Esophagus muscularis mucosa (tissue), 4 donors: ENCODE measurements at regions of chr15 and their contacts with region 1.

Region 1: DNA sequence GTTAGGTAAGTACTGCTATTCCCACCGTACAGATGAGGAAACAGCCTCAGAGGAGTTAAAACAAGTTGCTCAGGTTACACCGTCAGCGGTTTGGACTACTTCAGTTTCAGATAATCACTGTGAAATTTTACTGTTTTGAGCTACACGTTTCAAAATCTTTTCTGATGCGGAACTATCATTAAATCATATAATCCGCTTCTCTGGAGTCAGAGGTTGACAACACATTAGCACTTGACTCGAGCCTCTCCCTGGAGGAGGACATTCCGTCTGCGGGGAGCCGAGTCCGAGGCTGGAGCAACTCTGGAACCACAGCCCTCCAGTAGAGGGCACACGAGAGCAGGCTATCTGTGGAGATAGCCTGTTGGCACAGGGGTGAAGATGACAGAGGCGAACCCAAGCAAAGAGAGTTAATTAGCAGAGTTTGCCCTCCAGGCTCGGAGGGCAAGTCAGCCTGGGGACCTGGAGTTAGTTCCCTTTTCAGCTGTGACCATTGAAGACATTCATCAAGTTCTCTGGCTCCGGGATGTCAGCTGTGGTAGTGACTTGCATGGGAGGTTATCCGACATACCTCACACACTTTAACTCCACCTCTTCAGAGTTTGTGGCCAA is 131.2 kb downstream of the IGF1R start:
- DNase-seq: peak; percentile 94
- H3K4me3 ChIP-seq: no peak overlapping the region
- H3K27ac ChIP-seq: peak overlapping the region in 2 of 4 donors; percentile 13 to 50
- H3K4me1 ChIP-seq: peaks cover 32 to 58% (median 38%) of the 10 kb centered on the region in 4 donors
- H3K27me3 ChIP-seq: no peaks in the 10 kb centered on the region
- CTCF ChIP-seq: peak; percentile 88 to 96 (median 90)
- EP300 ChIP-seq: no peak
- POLR2A ChIP-seq: no peak

Region 2: GRCh38 chr15:98658831-98659699 is 120.5 kb before region 1 on chr15:
- intact Hi-C with region 1: loop called (anchors 10 kb)
- DNase-seq: no peak
- H3K4me3 ChIP-seq: no peak overlapping the region
- H3K27ac ChIP-seq: no peak overlapping the region
- H3K4me1 ChIP-seq: peaks cover 31 to 79% (median 58%) of the 10 kb centered on the region in 4 donors
- H3K27me3 ChIP-seq: no peaks in the 10 kb centered on the region
- CTCF ChIP-seq: peak; percentile 73 to 89 (median 74)
- EP300 ChIP-seq: no peak
- POLR2A ChIP-seq: no peak

Region 3: GRCh38 chr15:98845107-98845884 is 65.7 kb after region 1 on chr15:
- intact Hi-C with region 1: loop called (anchors 5 kb)
- DNase-seq: no peak
- H3K4me3 ChIP-seq: no peak overlapping the region
- H3K27ac ChIP-seq: no peak overlapping the region
- H3K4me1 ChIP-seq: peaks cover 28 to 62% (median 43%) of the 10 kb centered on the region in 4 donors
- H3K27me3 ChIP-seq: no peaks in the 10 kb centered on the region
- CTCF ChIP-seq: no peak
- EP300 ChIP-seq: no peak
- POLR2A ChIP-seq: no peak

Region 4: GRCh38 chr15:99059010-99059981 is 279.7 kb after region 1 on chr15:
- intact Hi-C with region 1: loop called (anchors 5 kb)
- DNase-seq: peak; percentile 96
- H3K4me3 ChIP-seq: peak overlapping the region; percentile 64 to 70 (median 65)
- H3K27ac ChIP-seq: peak overlapping the region; percentile 93 to 97 (median 96)
- H3K4me1 ChIP-seq: peaks cover 9 to 24% (median 21%) of the 10 kb centered on the region in 4 donors
- H3K27me3 ChIP-seq: no peaks in the 10 kb centered on the region
- CTCF ChIP-seq: peak; percentile 80 to 88 (median 82)
- EP300 ChIP-seq: peak; percentile 3
- POLR2A ChIP-seq: no peak

Region 5: GRCh38 chr15:99076552-99077308 is 297.2 kb after region 1 on chr15:
- intact Hi-C with region 1: loop called (anchors 5 kb)
- DNase-seq: no peak
- H3K4me3 ChIP-seq: peak overlapping the region; percentile 40 to 58 (median 47)
- H3K27ac ChIP-seq: peak overlapping the region; percentile 69 to 74 (median 71)
- H3K4me1 ChIP-seq: peaks cover 0 to 13% (median 7%) of the 10 kb centered on the region in 4 donors
- H3K27me3 ChIP-seq: no peaks in the 10 kb centered on the region
- CTCF ChIP-seq: peak; percentile 87 to 94 (median 88)
- EP300 ChIP-seq: no peak
- POLR2A ChIP-seq: no peak